ENCODE measurements at regions of chrX and their contacts with region 1.

Region 1: DNA sequence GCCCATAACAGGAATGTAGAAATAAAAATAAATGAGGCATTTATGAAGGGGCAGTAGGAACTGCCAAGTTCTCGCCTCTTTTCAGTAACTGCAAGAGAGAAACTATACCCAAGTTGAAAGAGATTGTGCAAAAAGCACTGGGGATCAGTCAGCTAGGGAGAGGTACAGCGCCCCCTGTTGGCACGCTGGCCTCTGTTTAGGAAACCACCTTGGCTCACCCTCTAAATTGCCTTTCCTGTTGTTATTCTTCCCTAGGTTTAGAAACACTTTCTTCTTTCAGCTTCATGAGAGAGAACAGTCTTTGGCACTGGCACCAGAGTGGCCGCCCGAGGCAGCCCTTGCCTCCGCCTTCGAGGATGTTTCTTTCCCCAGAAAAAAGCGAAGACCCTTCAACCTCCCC is 348.5 kb downstream of the MID1IP1 start:
- DNase-seq: no peak
- H3K4me3 ChIP-seq: peak overlapping the region in 1 of 2 experiments; percentile 39; a peak in 1 of 4 replicates
- H3K27ac ChIP-seq: no peak overlapping the region
- H3K4me1 ChIP-seq: peaks cover 0 to 6% of the 10 kb centered on the region in 2 experiments; a peak in 2 of 4 replicates
- H3K27me3 ChIP-seq: no peaks in the 10 kb centered on the region; the same call in 1 of the 2 replicates
- CTCF ChIP-seq: peak; percentile 75
- EP300 ChIP-seq: no peak
- RAD21 ChIP-seq: peak; percentile 67

Region 2: GRCh38 chrX:38754102-38754790 is 395.5 kb before region 1 on chrX:
- CTCF ChIA-PET with region 1: interaction called, 13 read pairs
- POLR2A ChIA-PET with region 1: no interaction called
- DNase-seq: peak; percentile 47
- H3K4me3 ChIP-seq: no peak overlapping the region; a peak in 1 of 4 replicates
- H3K27ac ChIP-seq: peak overlapping the region in 1 of 2 experiments; percentile 39; a peak in 1 of 4 replicates
- H3K4me1 ChIP-seq: peaks cover 0 to 6% of the 10 kb centered on the region in 2 experiments; a peak in 2 of 4 replicates
- H3K27me3 ChIP-seq: peaks cover 17% of the 10 kb centered on the region
- CTCF ChIP-seq: peak; percentile 75
- EP300 ChIP-seq: peak in 1 of 2 experiments; percentile 60; a peak in 1 of 4 replicates
- RAD21 ChIP-seq: peak; percentile 82

Region 3: GRCh38 chrX:38768079-38768478 is 381.7 kb before region 1 on chrX:
- CTCF ChIA-PET with region 1: interaction called, 23 read pairs
- POLR2A ChIA-PET with region 1: no interaction called
- DNase-seq: peak; percentile 19
- H3K4me3 ChIP-seq: no peak overlapping the region
- H3K27ac ChIP-seq: no peak overlapping the region
- H3K4me1 ChIP-seq: no peaks in the 10 kb centered on the region; a peak in 2 of 4 replicates
- H3K27me3 ChIP-seq: peaks cover 3% of the 10 kb centered on the region; the same call in 1 of the 2 replicates
- CTCF ChIP-seq: peak; percentile 58
- EP300 ChIP-seq: no peak
- RAD21 ChIP-seq: peak; percentile 82

Region 4: GRCh38 chrX:38803586-38804431 is 346.0 kb before region 1 on chrX:
- CTCF ChIA-PET with region 1: interaction called, 36 read pairs
- POLR2A ChIA-PET with region 1: interaction called, 4 read pairs
- DNase-seq: peak; percentile 87
- H3K4me3 ChIP-seq: peak overlapping the region; percentile 65 to 71
- H3K27ac ChIP-seq: peak overlapping the region; percentile 82 to 92
- H3K4me1 ChIP-seq: peaks cover 0 to 6% of the 10 kb centered on the region in 2 experiments; a peak in 2 of 4 replicates
- H3K27me3 ChIP-seq: no peaks in the 10 kb centered on the region
- CTCF ChIP-seq: no peak
- EP300 ChIP-seq: no peak
- RAD21 ChIP-seq: no peak

Region 5: DNA sequence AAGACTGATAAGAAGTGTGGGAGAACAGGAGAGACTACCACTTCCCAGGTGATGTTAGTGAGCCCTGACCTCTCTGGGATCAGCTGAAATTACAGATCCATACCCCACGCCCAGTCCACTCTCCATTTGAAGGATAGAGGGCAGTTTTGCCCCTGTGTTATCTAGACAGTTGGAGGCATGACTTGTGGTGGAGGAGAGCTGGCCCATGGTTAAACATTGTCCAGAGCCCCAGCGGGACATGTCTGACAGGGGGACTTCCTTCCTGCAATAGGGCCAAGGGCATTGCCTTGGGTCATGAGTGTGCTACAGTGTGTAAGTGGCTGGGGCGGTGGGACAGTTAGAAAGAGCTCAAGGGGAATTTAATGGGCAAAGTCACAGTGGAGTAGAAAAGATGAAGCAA is 167.4 kb before region 1 on chrX:
- CTCF ChIA-PET with region 1: no interaction called
- POLR2A ChIA-PET with region 1: no interaction called
- DNase-seq: no peak
- H3K4me3 ChIP-seq: no peak overlapping the region
- H3K27ac ChIP-seq: no peak overlapping the region
- H3K4me1 ChIP-seq: no peaks in the 10 kb centered on the region; a peak in 1 of 4 replicates
- H3K27me3 ChIP-seq: no peaks in the 10 kb centered on the region; the same call in 1 of the 2 replicates
- CTCF ChIP-seq: no peak
- EP300 ChIP-seq: no peak
- RAD21 ChIP-seq: no peak

Region 6: GRCh38 chrX:39125834-39126233 is 23.9 kb before region 1 on chrX:
- CTCF ChIA-PET with region 1: no interaction called
- POLR2A ChIA-PET with region 1: no interaction called
- DNase-seq: no peak
- H3K4me3 ChIP-seq: no peak overlapping the region
- H3K27ac ChIP-seq: no peak overlapping the region
- H3K4me1 ChIP-seq: no peaks in the 10 kb centered on the region
- H3K27me3 ChIP-seq: 0 out of 2 replicates have a peak, but pooled peaks cover 7% of the 10 kb centered on the region
- CTCF ChIP-seq: no peak
- EP300 ChIP-seq: no peak
- RAD21 ChIP-seq: no peak